ENCODE measurements at regions of chr1 and their contacts with region 1.

Region 1: DNA sequence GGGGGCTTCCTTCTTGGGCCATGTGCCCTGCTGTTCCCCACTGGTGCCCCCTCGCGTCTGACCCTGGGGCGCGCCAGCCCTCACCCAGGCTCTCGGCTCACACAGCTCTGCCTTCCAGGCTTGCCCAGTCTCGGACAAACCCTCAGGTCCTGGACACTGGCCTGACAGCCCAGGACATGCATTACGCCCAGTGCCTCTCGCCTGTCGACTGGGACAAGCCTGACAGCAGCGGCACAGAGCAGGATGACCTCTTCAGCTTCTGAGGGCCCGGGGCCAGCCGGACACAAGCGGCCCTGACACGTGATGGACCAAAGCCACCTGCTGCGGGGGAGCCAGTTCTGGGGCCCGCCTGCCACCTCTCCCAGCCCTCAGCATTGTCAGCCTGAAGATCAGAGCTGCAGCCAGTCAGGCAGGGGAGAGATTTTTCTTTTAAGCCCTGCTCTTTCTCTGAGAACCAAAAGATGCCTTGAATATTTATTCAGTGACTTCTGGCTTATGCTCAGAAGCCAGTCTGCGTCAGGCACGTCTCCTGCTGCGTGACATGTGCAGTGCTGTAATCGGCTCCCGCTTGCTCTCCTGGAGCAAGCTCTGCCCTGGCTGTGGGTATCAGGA is 23.4 kb downstream of the LDLRAP1 start:
- DNase-seq: peak in 7 of 9 experiments; percentile 40 to 82 (median 74)
- ATAC-seq: peak; percentile 27
- H3K4me3 ChIP-seq: peak overlapping the region in 1 of 2 experiments; percentile 85
- H3K4me3 Mint-ChIP-seq: peak overlapping the region; percentile 95
- H3K27ac ChIP-seq: peak overlapping the region in 1 of 2 experiments; percentile 25
- H3K27ac Mint-ChIP-seq: peak overlapping the region; percentile 96
- H3K4me1 ChIP-seq: peaks cover 73% of the 10 kb centered on the region
- H3K4me1 Mint-ChIP-seq: peaks cover 86% of the 10 kb centered on the region
- H3K27me3 ChIP-seq: no peaks in the 10 kb centered on the region
- H3K27me3 Mint-ChIP-seq: no peaks in the 10 kb centered on the region
- CTCF ChIP-seq: peak; percentile 49

Region 2: GRCh38 chr1:25543425-25544242 is 23.2 kb before region 1 on chr1 and contains the start of gene LDLRAP1:
- CTCF ChIA-PET with region 1: interaction called, 106 read pairs
- POLR2A ChIA-PET with region 1: interaction called, 121 read pairs
- intact Hi-C with region 1: loop called (anchors 1 kb)
- DNase-seq: peak; percentile 22 to 79 (median 56)
- ATAC-seq: peak; percentile 72
- H3K4me3 ChIP-seq: peak within 1 kb of the TSS; percentile 50 to 62
- H3K4me3 Mint-ChIP-seq: peak within 1 kb of the TSS; percentile 94
- H3K27ac ChIP-seq: peak within 1 kb of the TSS; percentile 16 to 56
- H3K27ac Mint-ChIP-seq: peak within 1 kb of the TSS; percentile 91
- H3K4me1 ChIP-seq: peaks cover 42% of the 10 kb centered on the region
- H3K4me1 Mint-ChIP-seq: peaks cover 49% of the 10 kb centered on the region
- H3K27me3 ChIP-seq: no peaks in the 10 kb centered on the region
- H3K27me3 Mint-ChIP-seq: no peaks in the 10 kb centered on the region
- CTCF ChIP-seq: no peak
- total RNA-seq, gene LDLRAP1: 46.1 to 49.5 TPM

Region 3: DNA sequence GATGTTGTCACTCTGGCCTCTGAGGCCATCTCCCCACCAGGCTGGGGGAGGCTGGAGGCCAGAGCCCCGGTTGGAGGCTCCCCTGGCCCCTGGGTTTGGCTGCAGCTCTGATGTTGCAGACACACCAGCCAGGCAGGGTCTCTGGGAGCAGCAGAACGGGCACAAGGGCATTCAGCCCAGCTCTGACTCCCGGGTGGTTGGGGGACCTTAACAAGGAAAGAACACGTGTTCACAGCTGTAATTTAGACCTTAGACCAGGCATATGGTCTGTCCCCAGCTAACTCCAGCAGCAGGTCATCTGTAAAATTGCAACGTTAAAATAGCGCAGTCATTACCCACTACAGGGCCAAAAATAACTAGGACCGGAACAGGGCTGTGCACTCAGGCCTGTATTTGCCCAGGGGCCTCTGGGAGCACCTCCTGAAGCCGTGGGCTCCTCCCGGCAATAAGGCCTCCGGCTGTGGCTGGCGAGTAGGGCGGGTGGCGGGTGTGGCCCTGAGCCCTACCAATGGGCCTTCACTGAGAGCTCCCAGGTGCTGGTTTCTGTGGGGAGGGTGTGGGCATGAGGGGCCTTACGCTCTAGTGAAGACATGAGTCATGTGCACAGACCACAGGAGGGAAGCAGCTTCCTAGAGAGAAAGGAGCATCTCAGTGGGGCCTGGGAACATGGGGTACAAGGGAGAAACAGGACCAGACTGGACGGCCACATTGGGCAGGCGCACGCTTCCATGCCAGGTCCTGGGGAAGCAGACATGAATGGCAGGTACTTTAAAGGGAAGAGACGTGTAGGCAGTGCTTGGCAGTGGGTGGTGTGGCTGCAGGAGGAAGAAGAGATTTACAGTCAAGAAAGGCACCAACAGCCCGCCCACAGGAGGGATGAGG is 17.3 kb before region 1 on chr1:
- CTCF ChIA-PET with region 1: interaction called, 106 read pairs
- POLR2A ChIA-PET with region 1: interaction called, 121 read pairs
- intact Hi-C with region 1: loop called in 1 of 2 experiments (anchors 1 kb)
- DNase-seq: peak; percentile 32 to 86 (median 80)
- ATAC-seq: peak; percentile 93
- H3K4me3 ChIP-seq: peak overlapping the region; percentile 19 to 36
- H3K4me3 Mint-ChIP-seq: peak overlapping the region; percentile 77
- H3K27ac ChIP-seq: peak overlapping the region; percentile 57 to 65
- H3K27ac Mint-ChIP-seq: peak overlapping the region; percentile 96
- H3K4me1 ChIP-seq: peaks cover 96% of the 10 kb centered on the region
- H3K4me1 Mint-ChIP-seq: peaks cover 96% of the 10 kb centered on the region
- H3K27me3 ChIP-seq: no peaks in the 10 kb centered on the region
- H3K27me3 Mint-ChIP-seq: no peaks in the 10 kb centered on the region
- CTCF ChIP-seq: no peak

Measured in CD8-positive, alpha-beta T cell (primary cell).